Activated CD4-positive, alpha-beta memory T cell treated with anti-CD3 and anti-CD28 coated beads for 36 hours (primary cell): ENCODE measurements at regions of chr5 and their contacts with region 1.

Region 1: GRCh38 chr5:59799668-59800346 is 93.7 kb downstream of the PDE4D start:
- DNase-seq: no peak
- H3K4me3 Mint-ChIP-seq: no peak overlapping the region
- H3K27ac Mint-ChIP-seq: no peak overlapping the region
- H3K4me1 Mint-ChIP-seq: no peaks in the 10 kb centered on the region
- H3K27me3 Mint-ChIP-seq: peaks cover 7% of the 10 kb centered on the region

Region 2: GRCh38 chr5:59380350-59380951 is 419.4 kb before region 1 on chr5:
- CTCF ChIA-PET with region 1: interaction called, 11 read pairs
- POLR2A ChIA-PET with region 1: no interaction called
- intact Hi-C with region 1: no loop called
- DNase-seq: peak; percentile 24
- H3K4me3 Mint-ChIP-seq: no peak overlapping the region
- H3K27ac Mint-ChIP-seq: no peak overlapping the region
- H3K4me1 Mint-ChIP-seq: no peaks in the 10 kb centered on the region
- H3K27me3 Mint-ChIP-seq: no peaks in the 10 kb centered on the region

Region 3: DNA sequence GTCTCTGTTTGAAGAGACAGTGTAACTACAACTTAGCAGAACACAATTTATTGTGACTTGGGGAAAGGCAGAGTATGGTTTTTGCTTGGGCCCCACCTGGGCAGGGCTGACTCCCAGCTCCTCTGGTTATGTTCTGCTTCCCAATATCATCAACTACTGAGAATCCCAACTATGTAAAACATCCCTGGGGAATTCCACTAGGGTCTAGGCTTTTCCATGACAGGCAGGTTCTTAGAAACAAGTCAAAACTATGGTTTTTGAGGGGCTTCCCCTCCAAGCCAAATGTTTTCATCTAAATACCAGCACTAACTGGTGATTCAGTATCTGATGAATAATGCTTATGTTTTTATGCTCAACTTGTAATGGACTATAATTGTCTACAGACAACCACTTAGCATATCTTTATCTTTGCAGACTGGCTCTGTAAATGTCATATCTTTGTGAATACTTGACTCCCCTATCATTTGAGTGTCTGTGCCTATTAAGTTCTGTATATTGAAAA is 315.8 kb before region 1 on chr5:
- CTCF ChIA-PET with region 1: no interaction called
- POLR2A ChIA-PET with region 1: no interaction called
- intact Hi-C with region 1: loop called (anchors 10 kb)
- DNase-seq: no peak
- H3K4me3 Mint-ChIP-seq: no peak overlapping the region
- H3K27ac Mint-ChIP-seq: peak overlapping the region; percentile 75
- H3K4me1 Mint-ChIP-seq: peaks cover 14% of the 10 kb centered on the region
- H3K27me3 Mint-ChIP-seq: peaks cover 4% of the 10 kb centered on the region

Region 4: DNA sequence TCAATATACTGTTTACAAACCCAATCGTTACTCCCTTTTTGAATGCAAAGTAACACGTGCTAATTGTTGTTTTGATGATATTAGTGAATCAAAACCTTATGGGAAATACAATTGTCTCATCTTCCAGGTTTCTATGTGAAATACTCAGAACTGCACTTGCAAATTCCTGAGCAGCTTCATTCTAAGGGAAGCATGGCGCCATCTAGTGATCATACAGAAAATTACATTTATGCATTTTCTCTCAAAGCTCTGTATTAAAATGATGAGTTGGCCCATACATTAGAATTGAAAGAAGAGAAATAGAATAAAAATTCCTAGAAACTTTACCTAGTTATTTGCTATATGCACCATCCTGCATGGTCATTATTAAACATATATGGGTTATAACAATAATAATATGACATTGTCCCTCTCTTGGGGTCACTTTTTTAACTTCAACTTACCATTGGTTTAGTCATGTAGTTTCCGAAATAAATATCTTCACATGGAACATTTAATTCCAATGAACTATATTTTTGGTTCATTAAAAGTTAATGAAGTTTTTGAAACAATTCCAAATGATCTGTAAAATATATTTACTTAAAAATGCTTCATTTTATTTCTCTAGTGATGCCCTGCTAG is 126.3 kb before region 1 on chr5:
- CTCF ChIA-PET with region 1: interaction called, 9 read pairs
- POLR2A ChIA-PET with region 1: no interaction called
- intact Hi-C with region 1: loop called (anchors 1 kb)
- DNase-seq: no peak
- H3K4me3 Mint-ChIP-seq: no peak overlapping the region
- H3K27ac Mint-ChIP-seq: no peak overlapping the region
- H3K4me1 Mint-ChIP-seq: no peaks in the 10 kb centered on the region
- H3K27me3 Mint-ChIP-seq: no peaks in the 10 kb centered on the region

Region 5: GRCh38 chr5:59810041-59810440 is 10.2 kb after region 1 on chr5:
- CTCF ChIA-PET with region 1: interaction called, 34 read pairs
- POLR2A ChIA-PET with region 1: no interaction called
- intact Hi-C with region 1: no loop called
- DNase-seq: peak; percentile 72
- H3K4me3 Mint-ChIP-seq: no peak overlapping the region
- H3K27ac Mint-ChIP-seq: no peak overlapping the region
- H3K4me1 Mint-ChIP-seq: no peaks in the 10 kb centered on the region
- H3K27me3 Mint-ChIP-seq: peaks cover 11% of the 10 kb centered on the region